ENCODE measurements at regions of chr12 and their contacts with region 1.

Region 1: DNA sequence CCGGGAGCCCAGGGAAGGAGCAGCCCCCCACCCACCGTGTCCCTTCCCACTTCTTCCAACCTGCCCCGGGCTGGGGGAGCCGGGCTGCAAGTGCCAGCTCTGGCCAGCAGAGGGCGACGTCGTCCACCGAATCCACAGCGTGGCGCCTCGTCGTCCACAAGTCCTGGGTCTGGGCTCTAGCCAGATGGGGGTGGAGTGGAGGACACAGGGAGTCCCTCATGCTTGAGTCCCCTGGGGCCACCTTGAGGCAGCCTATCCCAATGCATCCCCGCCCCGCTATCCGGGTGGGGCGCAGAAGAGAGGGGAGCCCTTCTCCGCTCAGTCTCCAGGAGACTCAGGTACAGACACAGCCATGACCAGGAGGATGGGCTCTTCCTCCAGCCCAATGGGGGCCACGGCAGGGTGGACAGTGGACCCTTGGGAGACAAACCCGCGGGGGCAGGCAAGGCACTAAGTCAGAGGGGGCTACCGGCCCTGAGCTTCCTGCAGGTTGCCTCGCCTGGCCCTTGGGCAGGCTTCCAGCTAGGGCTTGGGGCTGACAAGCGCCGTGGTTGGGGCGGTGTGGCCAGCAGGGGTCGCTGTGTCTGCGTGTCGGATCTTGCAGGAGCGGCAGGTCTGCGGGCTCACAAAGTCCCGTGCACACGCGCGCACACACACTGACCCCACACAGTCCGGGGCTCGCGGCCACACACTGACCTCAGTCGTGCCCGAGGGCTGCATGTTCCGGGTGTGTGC is 5.5 kb downstream of the AQP5 start:
- DNase-seq: peak; percentile 66
- H3K4me3 ChIP-seq: peak overlapping the region; percentile 5 to 45 (median 21)
- H3K27ac ChIP-seq: no peak overlapping the region
- H3K4me1 ChIP-seq: peaks cover 32% of the 10 kb centered on the region
- H3K27me3 ChIP-seq: no peaks in the 10 kb centered on the region
- CTCF ChIP-seq: peak; percentile 85 to 88

Region 2: GRCh38 chr12:49776413-49776812 is 190.8 kb before region 1 on chr12:
- CTCF ChIA-PET with region 1: no interaction called
- dilution Hi-C with region 1: no loop called
- in situ Hi-C with region 1: no loop called
- intact Hi-C with region 1: loop called (anchors 1 kb)
- DNase-seq: peak; percentile 64
- H3K4me3 ChIP-seq: no peak overlapping the region
- H3K27ac ChIP-seq: no peak overlapping the region
- H3K4me1 ChIP-seq: peaks cover 15% of the 10 kb centered on the region
- H3K27me3 ChIP-seq: no peaks in the 10 kb centered on the region
- CTCF ChIP-seq: peak; percentile 84 to 85

Region 3: DNA sequence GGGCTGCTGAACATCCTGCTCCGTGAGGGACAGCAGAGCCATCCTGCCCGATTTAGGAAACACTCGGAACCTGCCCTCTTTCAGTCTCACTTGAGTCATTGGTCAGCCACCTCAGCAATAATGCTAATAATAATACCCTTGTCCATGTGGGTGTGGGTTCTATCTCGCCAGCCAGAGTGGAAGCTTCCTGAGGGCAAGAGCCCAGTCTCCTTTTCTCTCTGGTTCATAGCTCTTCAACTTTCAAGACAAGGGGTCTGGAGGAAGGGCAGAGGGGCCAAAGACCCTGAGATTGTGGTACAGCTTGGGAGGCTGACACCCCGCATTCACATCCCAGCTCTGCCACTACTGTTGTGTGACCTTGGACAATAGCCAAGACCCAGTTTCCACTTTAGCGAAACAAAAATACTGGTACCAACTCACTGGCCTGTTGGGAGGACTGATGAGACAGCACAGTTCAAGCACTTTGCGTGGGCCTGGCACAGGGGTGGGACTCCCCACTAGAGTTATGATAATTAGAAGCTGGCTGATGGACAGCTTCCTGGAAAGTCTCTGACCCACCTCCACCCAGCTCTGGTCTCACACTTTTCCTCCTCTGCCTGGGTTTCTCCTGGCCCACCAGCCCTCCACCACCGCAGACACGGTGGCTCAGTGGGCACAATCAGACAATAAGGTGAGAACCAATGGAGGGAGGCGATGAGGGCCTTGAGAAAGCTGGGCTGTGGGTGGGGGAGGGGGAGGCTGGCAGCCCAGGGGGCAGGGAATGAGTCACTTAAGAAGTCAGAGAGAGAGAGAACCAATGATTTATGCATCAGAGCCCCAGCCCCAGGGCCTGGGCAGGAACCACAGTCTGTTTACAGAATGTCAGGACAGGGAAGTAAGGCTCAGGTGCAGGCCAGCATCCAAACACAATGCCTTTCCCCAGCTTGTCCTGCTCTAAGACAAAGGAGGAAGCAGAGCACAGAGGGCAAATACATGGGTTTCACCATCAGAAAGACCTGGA is 73.2 kb before region 1 on chr12:
- CTCF ChIA-PET with region 1: no interaction called
- dilution Hi-C with region 1: loop called (anchors 5 kb)
- in situ Hi-C with region 1: no loop called
- intact Hi-C with region 1: no loop called
- DNase-seq: peak; percentile 35
- H3K4me3 ChIP-seq: no peak overlapping the region
- H3K27ac ChIP-seq: no peak overlapping the region
- H3K4me1 ChIP-seq: no peaks in the 10 kb centered on the region
- H3K27me3 ChIP-seq: no peaks in the 10 kb centered on the region
- CTCF ChIP-seq: no peak

Region 4: DNA sequence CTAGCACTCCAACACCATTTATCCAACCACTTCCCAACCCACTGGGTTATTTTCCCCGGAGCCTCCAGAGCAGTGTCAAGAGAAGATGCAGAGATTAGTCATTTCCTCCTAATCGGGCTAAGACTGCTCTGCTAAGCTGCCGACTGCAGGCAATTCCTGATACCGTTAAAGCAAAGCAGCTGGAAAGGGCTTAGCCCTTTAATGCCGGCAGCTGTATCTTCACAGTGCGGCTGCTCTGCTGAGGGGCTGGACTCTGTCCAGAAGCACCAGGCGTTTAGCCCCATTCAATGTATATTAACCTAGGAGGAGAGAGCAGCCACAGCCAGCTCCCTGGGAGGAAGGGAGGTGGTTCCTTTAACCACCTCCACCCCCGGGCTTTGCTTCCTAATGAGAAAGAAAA is 16.7 kb after region 1 on chr12:
- CTCF ChIA-PET with region 1: interaction called, 12 read pairs
- dilution Hi-C with region 1: no loop called
- in situ Hi-C with region 1: no loop called
- intact Hi-C with region 1: no loop called
- DNase-seq: peak; percentile 50
- H3K4me3 ChIP-seq: no peak overlapping the region
- H3K27ac ChIP-seq: no peak overlapping the region
- H3K4me1 ChIP-seq: peaks cover 14% of the 10 kb centered on the region
- H3K27me3 ChIP-seq: no peaks in the 10 kb centered on the region
- CTCF ChIP-seq: no peak

Region 5: DNA sequence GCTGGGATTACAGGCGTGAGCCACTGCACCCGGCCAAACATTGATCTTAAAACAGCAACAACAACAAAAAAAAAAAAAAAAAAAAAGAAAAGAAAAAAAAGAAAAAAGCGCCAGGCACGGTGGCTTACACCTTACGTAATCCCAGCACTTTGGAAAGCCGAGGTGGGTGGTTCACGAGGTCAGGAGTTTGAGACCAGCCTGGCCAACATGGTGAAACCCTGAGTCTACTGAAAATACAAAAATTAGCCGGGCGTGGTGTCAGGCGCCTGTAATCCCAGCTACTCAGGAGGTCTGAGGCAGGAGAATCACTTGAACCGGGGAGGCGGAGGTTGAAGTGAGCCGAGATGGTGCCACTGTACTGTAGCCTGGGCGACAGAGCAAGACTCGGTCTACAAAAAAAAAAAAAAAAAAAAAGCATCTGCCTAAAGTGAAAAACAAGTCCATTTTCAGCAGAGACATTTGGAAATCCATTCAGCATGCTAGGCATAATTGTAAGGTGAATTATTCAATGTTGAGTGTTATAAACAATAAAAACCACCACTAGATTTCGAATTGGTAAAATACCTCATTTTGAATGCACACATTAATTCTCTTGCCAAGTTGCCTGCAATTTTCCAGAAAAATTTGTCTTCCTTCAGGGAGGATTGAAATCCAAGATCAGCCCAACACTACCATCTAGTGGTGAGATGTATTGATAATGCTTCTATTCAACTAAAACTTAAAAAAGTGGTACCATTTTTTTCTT is 207.9 kb after region 1 on chr12:
- CTCF ChIA-PET with region 1: no interaction called
- dilution Hi-C with region 1: no loop called
- in situ Hi-C with region 1: no loop called
- intact Hi-C with region 1: loop called (anchors 2 kb)
- DNase-seq: no peak
- H3K4me3 ChIP-seq: no peak overlapping the region
- H3K27ac ChIP-seq: no peak overlapping the region
- H3K4me1 ChIP-seq: no peaks in the 10 kb centered on the region
- H3K27me3 ChIP-seq: no peaks in the 10 kb centered on the region
- CTCF ChIP-seq: peak; percentile 52 to 56

Measured in mammary epithelial cell (primary cell).